Aorta (tissue), 5 donors: ENCODE measurements at regions of chr13 and their contacts with region 1.

Region 1: GRCh38 chr13:101514788-101515187 is 62.3 kb downstream of the ITGBL1 start:
- DNase-seq: no peak
- ATAC-seq: no peak
- H3K4me3 ChIP-seq: no peak overlapping the region
- H3K27ac ChIP-seq: no peak overlapping the region
- H3K4me1 ChIP-seq: peaks cover 0 to 8% of the 10 kb centered on the region in 2 donors
- H3K27me3 ChIP-seq: no peaks in the 10 kb centered on the region

Region 2: GRCh38 chr13:101360525-101360924 is 154.3 kb before region 1 on chr13:
- intact Hi-C with region 1: no loop called
- DNase-seq: no peak
- ATAC-seq: no peak
- H3K4me3 ChIP-seq: no peak overlapping the region
- H3K27ac ChIP-seq: no peak overlapping the region
- H3K4me1 ChIP-seq: no peaks in the 10 kb centered on the region
- H3K27me3 ChIP-seq: no peaks in the 10 kb centered on the region

Region 3: GRCh38 chr13:101408154-101408553 is 106.6 kb before region 1 on chr13:
- intact Hi-C with region 1: no loop called
- DNase-seq: no peak
- ATAC-seq: peak; percentile 57
- H3K4me3 ChIP-seq: peak overlapping the region in 1 of 2 donors; percentile 64
- H3K27ac ChIP-seq: peak overlapping the region; percentile 38 to 88
- H3K4me1 ChIP-seq: peaks cover 1 to 4% of the 10 kb centered on the region in 2 donors
- H3K27me3 ChIP-seq: no peaks in the 10 kb centered on the region

Region 4: DNA sequence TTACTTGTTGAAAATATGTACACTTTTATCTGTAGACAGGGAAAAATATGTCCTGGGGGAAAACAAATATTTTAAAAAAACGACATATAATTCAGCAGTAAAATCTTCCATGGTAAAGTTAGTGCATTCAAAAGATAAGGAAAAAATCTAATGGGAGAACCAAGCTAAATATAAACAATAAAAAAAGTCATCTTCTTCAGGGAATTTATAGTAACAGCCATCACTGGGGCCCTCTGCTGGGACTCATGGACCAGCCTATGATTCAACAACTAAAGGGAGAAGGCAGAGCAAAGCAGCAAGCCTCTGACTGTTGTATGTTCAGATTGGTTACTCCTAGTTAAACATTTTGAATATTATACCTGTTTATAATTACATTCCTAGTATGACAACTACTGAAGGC is 30.7 kb after region 1 on chr13:
- intact Hi-C with region 1: no loop called
- DNase-seq: no peak
- ATAC-seq: no peak
- H3K4me3 ChIP-seq: no peak overlapping the region
- H3K27ac ChIP-seq: no peak overlapping the region
- H3K4me1 ChIP-seq: peaks cover 0 to 5% of the 10 kb centered on the region in 2 donors
- H3K27me3 ChIP-seq: no peaks in the 10 kb centered on the region

Region 5: GRCh38 chr13:101757446-101758039 is 242.8 kb after region 1 on chr13:
- intact Hi-C with region 1: loop called (anchors 5 kb)
- DNase-seq: no peak
- ATAC-seq: peak; percentile 77
- H3K4me3 ChIP-seq: no peak overlapping the region
- H3K27ac ChIP-seq: no peak overlapping the region
- H3K4me1 ChIP-seq: no peaks in the 10 kb centered on the region
- H3K27me3 ChIP-seq: no peaks in the 10 kb centered on the region